ENCODE measurements at regions of chr15 and their contacts with region 1.

Region 1: GRCh38 chr15:63291507-63291906 is 14.1 kb downstream of the APH1B start:
- DNase-seq: no peak
- ATAC-seq: no peak
- H3K4me3 ChIP-seq: no peak overlapping the region
- H3K27ac ChIP-seq: peak overlapping the region in 1 of 4 donors; percentile 3
- H3K4me1 ChIP-seq: no peaks in the 10 kb centered on the region
- H3K27me3 ChIP-seq: no peaks in the 10 kb centered on the region
- CTCF ChIP-seq: no peak

Region 2: GRCh38 chr15:63089260-63090043 is 202.1 kb before region 1 on chr15:
- intact Hi-C with region 1: no loop called
- DNase-seq: no peak
- ATAC-seq: no peak
- H3K4me3 ChIP-seq: no peak overlapping the region
- H3K27ac ChIP-seq: no peak overlapping the region
- H3K4me1 ChIP-seq: peaks cover 0 to 4% (median 0%) of the 10 kb centered on the region in 3 donors
- H3K27me3 ChIP-seq: no peaks in the 10 kb centered on the region
- CTCF ChIP-seq: no peak

Region 3: DNA sequence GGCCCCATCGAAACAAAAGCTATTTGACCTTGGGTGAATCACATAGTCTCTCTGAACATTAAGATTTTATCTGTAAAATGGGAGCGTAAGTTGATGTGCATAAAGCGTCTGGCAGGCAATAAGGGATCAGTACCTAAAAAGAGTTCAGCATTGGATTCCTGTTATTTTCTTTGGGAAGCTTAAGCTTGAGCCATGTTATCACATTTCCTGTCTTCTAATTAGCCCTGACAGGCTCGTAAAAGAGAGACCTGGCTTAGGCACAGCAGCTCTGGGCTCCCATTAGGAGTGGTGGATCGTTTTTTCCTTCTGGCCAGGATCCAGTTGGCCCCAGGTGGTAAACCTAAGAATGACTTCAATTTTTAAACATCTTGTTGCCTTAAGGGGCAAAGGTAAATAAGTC is 116.1 kb after region 1 on chr15:
- intact Hi-C with region 1: loop called (anchors 5 to 10 kb)
- DNase-seq: no peak
- ATAC-seq: no peak
- H3K4me3 ChIP-seq: no peak overlapping the region
- H3K27ac ChIP-seq: no peak overlapping the region
- H3K4me1 ChIP-seq: no peaks in the 10 kb centered on the region
- H3K27me3 ChIP-seq: no peaks in the 10 kb centered on the region
- CTCF ChIP-seq: no peak

Region 4: GRCh38 chr15:63414474-63415120 is 123.1 kb after region 1 on chr15:
- intact Hi-C with region 1: loop called (anchors 5 to 10 kb)
- DNase-seq: no peak
- ATAC-seq: no peak
- H3K4me3 ChIP-seq: no peak overlapping the region
- H3K27ac ChIP-seq: no peak overlapping the region
- H3K4me1 ChIP-seq: no peaks in the 10 kb centered on the region
- H3K27me3 ChIP-seq: no peaks in the 10 kb centered on the region
- CTCF ChIP-seq: no peak